ENCODE measurements at regions of chr6 and their contacts with region 1.

Region 1: DNA sequence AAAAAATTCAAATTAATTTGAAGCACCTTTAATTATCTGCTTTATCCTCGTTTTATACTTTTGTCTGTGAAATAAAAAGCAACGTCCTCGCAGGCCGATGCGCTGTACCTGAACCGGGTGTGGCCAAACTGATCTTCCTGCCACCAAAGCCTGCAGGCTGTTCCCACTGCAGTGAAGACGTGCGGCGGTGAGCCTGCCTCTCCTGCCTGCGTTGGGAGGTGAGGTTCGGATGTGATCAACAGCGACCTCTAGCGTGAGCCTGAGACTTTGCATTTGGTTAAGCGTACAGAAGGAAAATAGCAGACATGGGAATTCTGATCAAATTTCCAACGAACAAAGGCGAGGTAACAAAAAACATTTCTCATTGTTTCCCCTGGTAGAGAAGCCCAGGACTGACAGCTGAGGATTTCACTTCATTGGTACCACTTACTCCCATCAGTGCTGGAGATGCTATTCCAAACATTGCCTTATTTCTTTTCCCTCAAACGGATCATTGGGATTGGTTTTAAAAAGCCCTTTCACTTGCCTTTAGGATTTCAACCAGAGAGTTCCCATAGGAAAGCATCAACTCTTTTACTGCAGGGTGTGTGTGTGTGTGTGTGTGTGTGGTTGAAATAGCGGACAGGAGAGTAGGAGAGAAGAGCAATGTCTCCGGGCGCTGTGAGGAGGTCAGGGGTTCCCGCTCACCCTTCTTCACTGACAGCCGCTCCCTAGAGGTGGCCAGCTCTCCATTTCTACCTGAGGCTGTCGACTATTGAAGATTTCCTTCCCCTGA is 56.6 kb upstream of the CCN6 start:
- DNase-seq: peak; percentile 75 to 79
- ATAC-seq: peak; percentile 97

Region 2: DNA sequence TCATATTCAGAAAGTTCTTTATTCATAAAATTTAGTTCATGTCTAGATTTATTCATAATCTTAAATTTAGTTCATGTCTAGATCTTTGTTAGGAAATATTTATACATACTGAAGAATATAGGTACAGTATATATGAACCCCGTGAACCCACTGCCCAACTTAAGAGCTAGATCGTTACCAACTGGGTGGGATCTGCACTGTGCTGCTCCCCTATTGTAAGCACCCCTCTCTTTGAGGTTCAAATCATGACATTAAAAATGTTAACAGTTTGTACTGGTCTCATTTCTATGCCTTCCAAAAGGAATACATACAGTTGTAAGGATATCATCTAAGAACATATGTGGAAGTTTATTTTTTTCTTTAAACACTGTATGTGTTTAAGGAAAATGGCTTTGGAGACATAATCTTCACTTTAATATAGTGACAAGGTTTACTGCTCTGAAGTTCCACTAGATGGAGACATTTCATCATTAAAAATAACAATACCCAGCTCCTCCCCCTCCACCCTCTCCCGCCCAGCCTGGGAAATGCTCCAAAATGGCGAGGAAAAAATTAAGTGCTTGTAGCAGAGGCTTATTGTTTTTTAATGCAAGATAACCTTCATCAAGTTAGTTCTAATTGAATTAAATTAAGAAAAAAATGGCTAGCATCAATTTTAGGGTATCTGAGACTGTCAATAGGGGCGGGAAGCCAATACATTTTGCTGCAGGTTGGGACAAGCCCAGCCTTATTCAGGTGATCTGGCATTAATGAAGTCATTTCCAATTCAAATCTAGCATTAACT is 287.5 kb before region 1 on chr6:
- intact Hi-C with region 1: loop called in 1 of 2 experiments (anchors 5 kb)
- DNase-seq: peak; percentile 59
- ATAC-seq: peak; percentile 78

Region 3: DNA sequence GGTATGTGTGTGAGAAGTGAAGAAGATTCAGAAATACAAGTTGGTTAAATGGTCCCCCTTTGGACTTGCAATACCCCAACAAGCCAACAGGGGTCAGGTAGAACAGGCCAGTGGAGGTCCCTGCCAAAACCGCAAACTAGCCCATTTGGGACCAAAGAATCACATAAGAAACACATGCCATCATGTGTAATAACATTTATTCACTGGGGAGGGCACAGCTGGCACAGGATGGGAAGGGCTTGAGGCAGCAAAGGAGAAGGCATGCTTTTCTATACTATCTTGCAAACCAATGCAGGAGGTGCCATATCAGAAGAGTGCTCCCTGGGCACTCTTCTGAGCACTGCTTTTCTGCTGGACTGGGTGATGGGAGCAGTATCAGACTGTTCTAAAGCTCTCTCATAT is 275.5 kb before region 1 on chr6:
- intact Hi-C with region 1: loop called in 1 of 2 experiments (anchors 10 kb)
- DNase-seq: peak in 1 of 2 donors; percentile 29
- ATAC-seq: no peak

Region 4: DNA sequence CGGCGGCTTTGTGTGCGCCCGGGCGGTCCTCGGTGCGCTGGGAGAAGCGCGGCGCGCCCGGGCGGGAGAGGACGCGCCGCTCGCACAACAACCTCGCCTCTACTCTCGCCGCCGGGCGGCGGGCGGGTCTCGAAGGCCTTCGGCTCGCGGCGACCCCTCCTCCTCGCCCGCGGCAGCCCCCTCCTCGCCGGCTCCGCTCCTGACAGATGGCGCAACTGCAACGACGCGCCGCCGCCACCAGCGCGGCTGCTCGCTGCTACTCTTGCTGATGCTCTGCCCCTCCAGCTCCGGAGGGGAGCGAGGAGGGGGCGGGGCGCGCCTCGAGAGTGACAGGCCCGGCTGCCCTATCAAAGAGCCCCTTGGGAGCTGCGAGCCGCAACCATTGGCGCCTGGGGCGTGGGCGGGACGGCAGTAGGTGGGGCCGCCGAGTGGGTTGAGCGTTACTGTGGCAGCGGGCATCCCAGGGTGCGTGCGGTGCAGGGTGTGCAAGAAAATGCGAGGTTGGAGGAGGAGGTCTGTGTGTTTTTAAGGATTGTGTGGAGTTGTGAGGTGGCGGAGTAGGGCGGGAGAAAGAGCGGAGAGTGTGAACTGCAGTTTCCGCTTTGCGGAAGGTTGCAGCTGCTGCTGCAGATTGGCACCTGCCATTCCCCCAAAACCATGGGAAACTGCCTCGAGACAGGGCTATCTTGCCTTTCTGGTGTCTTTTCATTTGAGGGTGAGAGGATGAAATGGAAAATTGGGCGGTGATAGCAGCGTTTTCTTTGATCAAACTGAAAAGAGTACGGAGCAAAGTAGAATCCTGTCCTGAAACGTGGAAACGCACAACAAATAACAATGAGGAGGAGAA is 123.9 kb before region 1 on chr6 and contains the start of gene FYN:
- intact Hi-C with region 1: loop called in 1 of 2 experiments (anchors 5 kb)
- DNase-seq: peak; percentile 95 to 98
- ATAC-seq: peak; percentile 100
- total RNA-seq, gene FYN: 16.0 to 23.8 TPM

Region 5: GRCh38 chr6:111888928-111889695 is 108.2 kb before region 1 on chr6:
- intact Hi-C with region 1: no loop called
- DNase-seq: no peak
- ATAC-seq: no peak